ENCODE measurements at regions of chr3 and their contacts with region 1.

Region 1: GRCh38 chr3:87350364-87351199 is 74.2 kb upstream of the POU1F1 start:
- DNase-seq: no peak
- ATAC-seq: peak; percentile 75
- H3K4me3 Mint-ChIP-seq: no peak overlapping the region
- H3K27ac Mint-ChIP-seq: no peak overlapping the region
- H3K4me1 Mint-ChIP-seq: no peaks in the 10 kb centered on the region
- H3K27me3 Mint-ChIP-seq: peaks cover 4% of the 10 kb centered on the region
- CTCF ChIP-seq: peak; percentile 86

Region 2: GRCh38 chr3:87426918-87427317 is 76.3 kb after region 1 on chr3:
- CTCF ChIA-PET with region 1: no interaction called
- POLR2A ChIA-PET with region 1: no interaction called
- intact Hi-C with region 1: no loop called
- DNase-seq: no peak
- ATAC-seq: no peak
- H3K4me3 Mint-ChIP-seq: no peak overlapping the region
- H3K27ac Mint-ChIP-seq: no peak overlapping the region
- H3K4me1 Mint-ChIP-seq: no peaks in the 10 kb centered on the region
- H3K27me3 Mint-ChIP-seq: no peaks in the 10 kb centered on the region
- CTCF ChIP-seq: no peak

Region 3: GRCh38 chr3:87771341-87772192 is 421.0 kb after region 1 on chr3:
- CTCF ChIA-PET with region 1: interaction called, 5 read pairs
- POLR2A ChIA-PET with region 1: no interaction called
- intact Hi-C with region 1: loop called (anchors 5 kb)
- DNase-seq: no peak
- ATAC-seq: peak; percentile 75
- H3K4me3 Mint-ChIP-seq: no peak overlapping the region
- H3K27ac Mint-ChIP-seq: no peak overlapping the region
- H3K4me1 Mint-ChIP-seq: no peaks in the 10 kb centered on the region
- H3K27me3 Mint-ChIP-seq: peaks cover 11% of the 10 kb centered on the region
- CTCF ChIP-seq: no peak